Activated CD8-positive, alpha-beta T cell treated with anti-CD3 and anti-CD28 coated beads, Interleukin-2, amount 10 ng/mL, durations not matched to agents 7 days and 5 days (primary cell): ENCODE measurements at regions of chrX and their contacts with region 1.

Region 1: DNA sequence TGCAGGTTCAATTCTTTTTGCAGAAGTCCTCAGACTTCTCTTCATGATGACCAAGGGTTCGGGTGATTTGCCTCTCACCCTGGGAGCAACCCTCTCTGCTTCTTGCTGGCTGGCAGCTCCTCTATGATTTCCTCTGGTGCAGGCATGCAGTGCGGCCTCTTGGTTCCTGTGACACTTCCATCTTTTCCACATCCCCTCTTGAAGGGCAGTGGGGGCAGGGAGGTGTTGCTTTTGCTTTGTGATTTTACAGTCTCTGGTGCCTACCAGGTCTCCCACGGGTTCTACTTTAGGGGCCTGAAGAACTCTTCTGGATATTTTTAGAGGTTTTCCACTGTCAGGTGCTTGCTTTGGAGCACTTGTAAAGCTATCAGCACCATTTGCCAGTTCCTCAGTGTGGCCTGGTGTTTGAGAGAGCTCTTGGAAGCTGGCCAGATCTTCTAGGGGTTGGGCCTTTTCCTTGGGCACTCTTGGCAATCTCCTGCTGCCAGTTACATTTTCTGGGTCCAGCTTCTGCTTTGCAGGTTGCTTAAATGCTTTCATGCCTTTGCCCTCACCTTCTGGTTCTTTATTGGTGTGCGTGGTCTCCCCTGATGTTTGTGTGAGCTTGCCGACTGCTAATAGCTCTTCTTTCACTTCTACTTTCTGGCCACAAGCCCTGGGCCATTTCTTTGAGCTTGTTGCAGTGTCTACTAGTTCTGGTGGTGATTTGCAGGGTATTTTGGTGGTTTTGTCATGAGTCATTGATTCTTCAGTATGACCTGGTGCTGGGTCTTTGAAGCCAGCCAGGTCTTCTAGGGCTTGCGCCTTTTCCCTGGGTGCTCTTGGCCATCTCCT is 11.5 kb upstream of the CHST7 start:
- DNase-seq: peak; percentile 40
- ATAC-seq: peak; percentile 69
- H3K4me3 Mint-ChIP-seq: no peak overlapping the region
- H3K27ac Mint-ChIP-seq: peak overlapping the region; percentile 16
- H3K4me1 Mint-ChIP-seq: peaks cover 16% of the 10 kb centered on the region
- H3K27me3 Mint-ChIP-seq: no peaks in the 10 kb centered on the region

Region 2: GRCh38 chrX:46573331-46573891 is 11.4 kb after region 1 on chrX and contains the start of gene CHST7:
- CTCF ChIA-PET with region 1: interaction called, 17 read pairs
- POLR2A ChIA-PET with region 1: interaction called, 4 read pairs
- DNase-seq: peak; percentile 70
- ATAC-seq: peak; percentile 76
- H3K4me3 Mint-ChIP-seq: peak within 1 kb of the TSS; percentile 79
- H3K27ac Mint-ChIP-seq: peak within 1 kb of the TSS; percentile 89
- H3K4me1 Mint-ChIP-seq: peaks cover 32% of the 10 kb centered on the region
- H3K27me3 Mint-ChIP-seq: no peaks in the 10 kb centered on the region
- total RNA-seq, gene CHST7: 5.4 to 6.5 TPM